A673 (cell line): ENCODE measurements at regions of chr15 and their contacts with region 1.

Region 1: GRCh38 chr15:77543159-77543882 is 89.4 kb downstream of the LINGO1 start:
- DNase-seq: peak; percentile 92
- H3K4me3 ChIP-seq: peak overlapping the region; percentile 41
- H3K27ac ChIP-seq: peak overlapping the region; percentile 50
- H3K4me1 ChIP-seq: peaks cover 8% of the 10 kb centered on the region
- H3K27me3 ChIP-seq: no peaks in the 10 kb centered on the region
- CTCF ChIP-seq: peak; percentile 99

Region 2: DNA sequence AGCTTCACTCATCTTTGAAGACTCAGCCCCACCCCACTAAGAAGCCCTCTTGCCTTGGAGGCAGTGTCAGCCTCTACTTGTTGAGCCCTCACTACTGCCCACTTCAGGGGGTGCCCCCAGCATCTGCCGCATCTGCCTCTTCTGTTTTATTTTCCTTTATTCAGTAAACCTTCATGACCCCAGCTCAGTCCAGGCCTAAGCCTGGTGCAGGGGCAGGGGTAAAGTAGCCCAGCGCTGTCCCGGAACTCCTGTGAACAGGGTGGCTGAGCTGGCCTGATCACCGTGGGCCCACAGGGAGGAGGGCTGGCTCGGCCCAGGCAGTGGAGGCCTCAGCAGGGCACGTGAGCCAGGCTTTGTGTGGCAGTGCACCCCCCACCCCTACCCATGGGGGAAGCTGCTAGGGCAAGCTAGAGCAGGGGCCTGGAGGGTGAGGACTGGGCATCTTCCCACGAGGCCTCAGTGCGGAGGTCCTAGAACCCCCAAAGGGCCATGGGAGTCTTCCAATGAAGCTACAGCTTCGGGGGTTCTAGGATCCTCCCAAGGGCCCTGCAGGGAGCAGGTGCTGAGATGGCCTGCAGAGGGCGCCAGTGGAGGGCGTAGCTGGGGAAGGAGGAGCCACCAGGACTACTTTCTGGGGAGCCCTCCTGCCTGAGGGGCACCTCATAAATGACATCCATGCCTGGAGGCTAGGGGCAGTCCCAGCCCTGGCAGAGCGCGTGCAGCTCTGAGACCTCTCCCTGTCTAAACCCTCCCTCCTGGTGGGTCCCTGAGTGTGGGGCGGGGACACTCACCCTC is 508.4 kb before region 1 on chr15:
- CTCF ChIA-PET with region 1: interaction called, 10 read pairs
- POLR2A ChIA-PET with region 1: no interaction called
- intact Hi-C with region 1: no loop called
- DNase-seq: peak; percentile 60
- H3K4me3 ChIP-seq: no peak overlapping the region
- H3K27ac ChIP-seq: peak overlapping the region; percentile 17
- H3K4me1 ChIP-seq: peaks cover 6% of the 10 kb centered on the region
- H3K27me3 ChIP-seq: no peaks in the 10 kb centered on the region
- CTCF ChIP-seq: peak; percentile 94

Region 3: GRCh38 chr15:77118882-77119321 is 424.4 kb before region 1 on chr15:
- CTCF ChIA-PET with region 1: interaction called, 40 read pairs
- POLR2A ChIA-PET with region 1: no interaction called
- intact Hi-C with region 1: loop called (anchors 2 kb)
- DNase-seq: peak; percentile 82
- H3K4me3 ChIP-seq: no peak overlapping the region
- H3K27ac ChIP-seq: no peak overlapping the region
- H3K4me1 ChIP-seq: no peaks in the 10 kb centered on the region
- H3K27me3 ChIP-seq: no peaks in the 10 kb centered on the region
- CTCF ChIP-seq: peak; percentile 93

Region 4: DNA sequence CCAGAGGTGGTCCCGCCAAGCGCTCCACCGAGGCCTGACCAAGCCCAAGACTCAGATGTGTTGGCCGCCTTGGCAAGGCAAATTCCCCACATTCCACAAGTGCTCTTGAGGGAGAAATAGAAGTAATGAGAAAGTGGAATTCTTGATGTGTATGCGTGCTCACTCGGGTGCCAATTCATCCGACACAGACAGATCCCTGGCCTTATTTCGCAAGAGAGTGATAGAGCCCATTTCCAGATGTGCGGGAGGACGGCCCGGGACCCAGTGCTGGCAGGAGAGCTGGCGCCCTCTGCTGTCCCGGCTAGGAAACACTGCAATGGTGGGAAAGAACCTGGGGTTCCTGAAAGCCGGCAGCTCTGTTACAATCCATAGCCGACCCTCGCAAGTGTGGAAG is 46.6 kb before region 1 on chr15:
- CTCF ChIA-PET with region 1: interaction called, 14 read pairs
- POLR2A ChIA-PET with region 1: no interaction called
- intact Hi-C with region 1: loop called (anchors 1 kb)
- DNase-seq: peak; percentile 95
- H3K4me3 ChIP-seq: peak overlapping the region; percentile 24
- H3K27ac ChIP-seq: peak overlapping the region; percentile 84
- H3K4me1 ChIP-seq: peaks cover 30% of the 10 kb centered on the region
- H3K27me3 ChIP-seq: no peaks in the 10 kb centered on the region
- CTCF ChIP-seq: peak; percentile 97

Region 5: GRCh38 chr15:77870195-77871065 is 327.1 kb after region 1 on chr15:
- CTCF ChIA-PET with region 1: interaction called, 3 read pairs
- POLR2A ChIA-PET with region 1: no interaction called
- intact Hi-C with region 1: loop called (anchors 5 kb)
- DNase-seq: peak; percentile 63
- H3K4me3 ChIP-seq: no peak overlapping the region
- H3K27ac ChIP-seq: no peak overlapping the region
- H3K4me1 ChIP-seq: peaks cover 24% of the 10 kb centered on the region
- H3K27me3 ChIP-seq: no peaks in the 10 kb centered on the region
- CTCF ChIP-seq: peak; percentile 72

Region 6: GRCh38 chr15:78087951-78088772 is 544.8 kb after region 1 on chr15:
- CTCF ChIA-PET with region 1: no interaction called
- POLR2A ChIA-PET with region 1: no interaction called
- intact Hi-C with region 1: no loop called
- DNase-seq: no peak
- H3K4me3 ChIP-seq: no peak overlapping the region
- H3K27ac ChIP-seq: no peak overlapping the region
- H3K4me1 ChIP-seq: peaks cover 21% of the 10 kb centered on the region
- H3K27me3 ChIP-seq: no peaks in the 10 kb centered on the region
- CTCF ChIP-seq: no peak